ENCODE measurements at regions of chr19 and their contacts with region 1.

Region 1: GRCh38 chr19:15449620-15450527 is at the start of gene WIZ:
- DNase-seq: peak; percentile 62 to 97 (median 74)

Region 2: DNA sequence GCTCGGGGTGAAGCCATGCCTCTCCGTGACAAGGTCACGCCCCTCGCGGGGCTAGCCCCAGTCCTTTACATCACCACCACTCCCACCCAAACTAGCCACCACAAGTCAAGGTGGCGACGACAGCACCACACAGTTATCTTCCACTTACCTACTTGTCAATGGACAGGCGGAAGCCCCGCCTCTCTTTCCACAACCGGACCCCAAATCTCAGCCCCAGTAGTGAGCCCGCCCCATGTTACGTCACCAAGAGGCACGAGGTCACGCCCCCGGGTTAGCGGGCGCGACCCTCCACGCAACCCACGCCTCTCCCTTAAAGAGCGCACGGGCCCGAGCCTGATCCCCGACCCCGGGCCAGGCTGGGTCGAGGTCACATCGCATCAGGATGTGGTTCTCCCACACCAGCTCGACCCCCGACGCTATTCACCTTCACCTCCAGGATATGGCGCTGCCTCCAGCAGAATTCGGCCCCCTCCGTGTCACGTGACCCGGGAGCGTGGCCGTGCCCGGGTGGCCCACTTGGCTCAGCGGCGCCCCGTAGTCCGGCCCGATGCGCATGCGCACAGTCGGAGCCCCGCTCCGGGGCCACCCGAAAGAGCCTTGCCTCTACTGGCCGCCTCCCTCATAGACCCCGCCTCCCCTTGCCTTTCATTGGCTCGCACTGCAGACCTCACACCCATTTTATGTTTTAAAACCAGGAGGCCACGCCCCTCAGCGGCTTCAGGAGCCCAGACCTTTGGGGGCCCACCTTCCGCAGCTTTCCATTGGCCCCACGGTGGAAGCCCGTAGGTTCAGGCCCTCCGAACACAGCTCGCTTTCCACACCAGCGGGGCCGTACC is 324.4 kb before region 1 on chr19:
- intact Hi-C with region 1: loop called (anchors 10 kb)
- DNase-seq: peak; percentile 94 to 99 (median 97)

Region 3: DNA sequence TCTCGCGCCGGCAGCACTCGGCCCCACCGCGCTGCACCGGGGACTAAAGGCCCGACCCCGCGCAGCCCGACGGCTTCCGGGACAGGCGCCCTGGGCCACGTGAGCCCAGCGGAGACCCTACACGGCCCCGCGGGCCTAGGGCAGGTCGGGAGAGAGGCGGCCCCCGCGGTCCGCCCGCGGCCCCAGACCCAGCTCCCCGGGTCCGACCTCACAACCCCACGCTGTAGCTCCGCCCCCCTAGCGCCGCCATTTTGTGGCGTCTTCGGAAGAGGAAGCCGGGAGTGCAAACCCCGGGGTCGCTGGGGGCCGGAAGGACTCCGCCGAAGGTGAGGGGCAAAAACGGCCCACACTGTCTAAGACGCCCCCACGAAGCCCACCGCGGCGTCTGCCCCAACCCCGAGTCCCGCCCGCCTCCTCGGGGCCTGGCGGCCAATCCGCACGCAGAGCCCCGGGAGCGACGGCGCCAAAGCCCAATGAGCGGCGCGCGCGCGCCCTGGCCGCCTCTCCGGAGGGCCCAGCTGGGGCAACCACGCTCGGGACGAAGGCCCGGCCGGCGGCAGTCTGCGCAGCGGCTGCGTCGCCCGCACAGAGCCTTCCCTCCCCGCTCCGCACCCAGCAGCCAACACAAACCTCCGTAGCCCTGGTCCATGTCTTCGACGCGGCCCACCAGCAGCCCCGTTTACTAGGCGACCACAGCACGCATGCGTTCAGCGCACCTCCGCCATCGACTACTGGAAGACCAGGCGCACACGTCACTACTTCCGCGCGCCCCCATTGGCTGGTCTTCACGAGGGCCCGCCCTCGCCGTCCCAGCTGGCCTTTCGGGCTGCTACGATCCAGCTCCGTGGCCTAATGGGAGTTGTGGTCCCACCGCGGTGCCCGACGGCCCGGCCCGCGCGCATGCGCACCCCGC is 70.5 kb before region 1 on chr19 and contains the start of gene AKAP8:
- intact Hi-C with region 1: no loop called
- DNase-seq: peak; percentile 94 to 100 (median 98)

Region 4: DNA sequence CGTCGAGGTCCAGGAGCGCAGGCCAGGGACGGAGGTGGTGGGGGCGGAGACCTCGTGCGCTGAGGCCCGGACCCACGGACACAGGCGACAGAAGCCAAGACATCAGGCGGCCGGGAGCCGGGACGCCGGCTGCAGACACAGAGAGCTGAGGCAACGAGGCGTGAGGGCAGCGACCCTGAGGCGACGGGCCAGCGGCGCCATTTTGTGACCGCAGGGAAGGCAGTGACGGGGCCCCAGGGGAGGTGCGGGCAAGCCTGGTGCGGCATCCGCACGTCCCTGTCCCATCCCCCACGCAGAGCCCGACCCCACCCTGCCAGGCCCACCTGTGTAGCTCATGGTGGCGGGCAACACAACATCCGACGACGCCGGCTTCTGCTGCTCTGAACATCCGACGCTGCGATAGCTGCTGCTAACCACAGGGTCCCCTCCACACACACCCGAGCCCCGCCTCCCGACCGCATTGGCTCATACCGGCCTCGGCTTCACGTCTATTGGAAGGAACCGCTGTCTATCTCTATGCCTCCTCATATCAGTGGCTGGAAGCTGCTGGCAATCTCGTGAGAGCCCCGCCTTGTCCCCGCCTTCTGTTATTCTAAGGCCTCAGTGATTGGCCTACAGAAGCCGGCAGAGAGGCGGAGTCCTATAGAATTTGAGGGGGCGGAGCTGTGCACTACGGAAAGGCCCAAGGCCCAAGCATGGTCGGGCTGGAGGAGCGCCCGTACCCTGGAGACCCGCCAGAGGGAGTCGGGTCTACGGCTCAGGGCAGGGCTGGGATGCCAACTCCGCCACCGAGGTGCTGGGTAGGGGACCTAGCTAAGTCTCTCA is 31.1 kb before region 1 on chr19 and contains the start of gene AKAP8L:
- intact Hi-C with region 1: loop called (anchors 5 kb)
- DNase-seq: peak; percentile 91 to 100 (median 96)

Region 5: GRCh38 chr19:15432629-15433518 is 17.0 kb before region 1 on chr19:
- intact Hi-C with region 1: loop called (anchors 2 kb)
- DNase-seq: peak; percentile 88 to 99 (median 93)